ENCODE measurements at regions of chr3 and their contacts with region 1.

Region 1: DNA sequence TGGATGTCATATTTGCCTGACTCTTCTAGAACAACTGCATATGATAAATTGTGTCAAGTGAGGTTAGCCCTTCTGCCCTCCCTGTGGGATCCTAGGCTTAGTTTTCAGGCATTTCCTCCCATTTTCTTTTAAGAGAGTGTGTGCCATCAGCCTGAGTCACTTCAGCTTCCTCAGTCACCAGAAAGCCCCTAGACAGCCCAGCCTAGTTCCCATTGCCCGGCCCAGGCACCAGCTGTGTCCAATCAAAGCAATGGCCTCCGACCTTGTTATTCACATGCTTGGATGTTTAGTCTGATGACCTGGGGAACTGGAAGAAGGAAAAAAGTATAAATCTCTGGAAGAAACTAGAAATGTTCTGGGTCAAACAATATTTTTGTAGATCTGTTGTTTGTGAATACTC is 221.9 kb upstream of the LRIG1 start:
- DNase-seq: peak; percentile 78 to 82
- ATAC-seq: peak; percentile 81
- H3K4me3 ChIP-seq: no peak overlapping the region
- H3K27ac ChIP-seq: peak overlapping the region in 1 of 2 donors; percentile 46
- H3K4me1 ChIP-seq: peaks cover 0 to 4% of the 10 kb centered on the region in 2 donors
- H3K27me3 ChIP-seq: no peaks in the 10 kb centered on the region

Region 2: GRCh38 chr3:66665021-66665695 is 57.5 kb before region 1 on chr3:
- intact Hi-C with region 1: loop called in 1 of 2 experiments (anchors 5 kb)
- DNase-seq: no peak
- ATAC-seq: no peak
- H3K4me3 ChIP-seq: no peak overlapping the region
- H3K27ac ChIP-seq: no peak overlapping the region
- H3K4me1 ChIP-seq: peaks cover 2 to 4% of the 10 kb centered on the region in 2 donors
- H3K27me3 ChIP-seq: no peaks in the 10 kb centered on the region

Measured in aorta (tissue), 5 donors.